Activated CD4-positive, alpha-beta T cell treated with anti-CD3 and anti-CD28 coated beads, Interleukin-2, amount 10 ng/mL, durations not matched to agents 24 days and 14 days (primary cell): ENCODE measurements at regions of chr20 and their contacts with region 1.

Region 1: DNA sequence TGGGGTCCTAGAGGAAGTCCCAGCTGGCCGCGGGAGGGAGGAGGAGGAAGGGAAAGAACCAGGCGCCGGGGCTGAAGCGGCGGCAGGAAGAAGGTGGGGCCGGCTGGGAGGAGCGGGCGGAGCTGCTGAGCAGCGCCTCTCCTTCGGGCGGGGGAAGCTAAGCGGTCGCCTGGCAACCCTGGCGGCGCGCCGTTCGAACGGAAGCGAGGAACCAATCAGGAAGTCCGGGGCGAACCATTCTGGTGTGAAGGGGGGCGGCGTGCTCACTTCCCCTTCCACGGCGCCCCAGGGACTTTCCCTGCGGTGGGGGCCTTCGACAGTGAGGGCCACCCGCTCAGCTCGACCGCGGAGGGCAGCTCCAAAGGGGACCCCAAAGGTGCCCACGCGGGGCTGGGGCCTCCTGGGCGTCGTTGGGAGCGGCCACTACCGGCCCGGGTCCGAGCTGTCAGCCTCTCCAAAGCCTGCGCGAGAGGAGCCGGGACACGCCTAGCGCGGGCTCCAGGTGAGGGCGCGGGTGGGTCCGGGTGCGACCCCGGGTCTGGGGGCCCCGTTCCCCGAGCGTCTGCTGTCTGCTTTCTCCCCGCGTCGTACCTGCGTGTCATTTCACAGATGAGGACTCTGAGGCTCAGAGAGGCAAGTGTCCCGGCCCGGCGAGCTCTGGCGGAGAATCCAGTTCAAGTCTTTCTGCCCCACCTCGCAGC is at the start of gene FAM110A:
- DNase-seq: peak; percentile 99
- H3K4me3 Mint-ChIP-seq: peak within 1 kb of the TSS; percentile 84
- H3K27ac Mint-ChIP-seq: peak within 1 kb of the TSS; percentile 85
- H3K4me1 Mint-ChIP-seq: peaks cover 43% of the 10 kb centered on the region
- H3K27me3 Mint-ChIP-seq: no peaks in the 10 kb centered on the region
- total RNA-seq, gene FAM110A: 13.3 and 15.4 TPM in 2 replicates

Region 2: GRCh38 chr20:653110-653589 is 180.4 kb before region 1 on chr20 and contains the start of gene SRXN1:
- intact Hi-C with region 1: loop called (anchors 2 kb)
- DNase-seq: peak; percentile 94
- H3K4me3 Mint-ChIP-seq: peak within 1 kb of the TSS; percentile 91
- H3K27ac Mint-ChIP-seq: peak within 1 kb of the TSS; percentile 84
- H3K4me1 Mint-ChIP-seq: peaks cover 29% of the 10 kb centered on the region
- H3K27me3 Mint-ChIP-seq: peaks cover 31% of the 10 kb centered on the region
- total RNA-seq, gene SRXN1: 24.1 and 25.5 TPM in 2 replicates

Region 3: GRCh38 chr20:815914-816606 is 17.5 kb before region 1 on chr20:
- intact Hi-C with region 1: no loop called
- DNase-seq: peak; percentile 89
- H3K4me3 Mint-ChIP-seq: no peak overlapping the region
- H3K27ac Mint-ChIP-seq: no peak overlapping the region
- H3K4me1 Mint-ChIP-seq: peaks cover 2% of the 10 kb centered on the region
- H3K27me3 Mint-ChIP-seq: peaks cover 1% of the 10 kb centered on the region

Region 4: DNA sequence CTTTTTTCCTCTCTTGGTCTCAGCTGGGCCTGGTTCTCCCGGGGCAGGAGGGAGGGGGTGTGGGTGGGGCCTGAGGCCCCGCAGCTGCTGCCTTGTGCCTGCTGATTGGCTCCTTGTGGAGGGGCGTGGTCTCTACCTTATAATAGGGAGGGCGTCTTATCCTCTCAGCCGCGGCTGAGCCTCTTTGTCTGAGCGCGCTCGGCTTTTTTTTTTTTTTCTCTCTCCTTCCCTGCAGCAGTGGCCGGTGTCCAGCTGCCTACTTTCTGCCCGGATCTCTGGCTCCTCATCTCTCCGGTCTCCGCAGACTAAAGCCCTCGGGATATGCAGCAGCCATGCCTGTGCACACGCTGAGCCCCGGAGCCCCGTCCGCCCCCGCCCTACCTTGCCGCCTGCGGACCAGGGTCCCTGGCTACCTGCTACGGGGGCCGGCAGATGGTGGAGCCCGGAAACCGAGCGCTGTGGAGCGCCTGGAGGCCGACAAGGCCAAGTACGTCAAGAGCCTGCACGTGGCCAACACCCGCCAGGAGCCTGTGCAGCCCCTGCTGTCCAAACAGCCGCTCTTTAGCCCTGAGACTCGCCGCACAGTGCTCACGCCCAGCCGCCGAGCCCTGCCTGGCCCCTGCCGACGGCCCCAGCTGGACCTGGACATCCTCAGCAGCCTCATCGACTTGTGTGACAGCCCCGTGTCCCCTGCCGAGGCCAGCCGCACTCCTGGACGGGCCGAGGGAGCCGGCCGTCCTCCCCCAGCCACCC is 11.0 kb after region 1 on chr20:
- intact Hi-C with region 1: loop called (anchors 1 kb)
- DNase-seq: peak; percentile 96
- H3K4me3 Mint-ChIP-seq: peak overlapping the region; percentile 87
- H3K27ac Mint-ChIP-seq: peak overlapping the region; percentile 57
- H3K4me1 Mint-ChIP-seq: peaks cover 46% of the 10 kb centered on the region
- H3K27me3 Mint-ChIP-seq: no peaks in the 10 kb centered on the region

Region 5: DNA sequence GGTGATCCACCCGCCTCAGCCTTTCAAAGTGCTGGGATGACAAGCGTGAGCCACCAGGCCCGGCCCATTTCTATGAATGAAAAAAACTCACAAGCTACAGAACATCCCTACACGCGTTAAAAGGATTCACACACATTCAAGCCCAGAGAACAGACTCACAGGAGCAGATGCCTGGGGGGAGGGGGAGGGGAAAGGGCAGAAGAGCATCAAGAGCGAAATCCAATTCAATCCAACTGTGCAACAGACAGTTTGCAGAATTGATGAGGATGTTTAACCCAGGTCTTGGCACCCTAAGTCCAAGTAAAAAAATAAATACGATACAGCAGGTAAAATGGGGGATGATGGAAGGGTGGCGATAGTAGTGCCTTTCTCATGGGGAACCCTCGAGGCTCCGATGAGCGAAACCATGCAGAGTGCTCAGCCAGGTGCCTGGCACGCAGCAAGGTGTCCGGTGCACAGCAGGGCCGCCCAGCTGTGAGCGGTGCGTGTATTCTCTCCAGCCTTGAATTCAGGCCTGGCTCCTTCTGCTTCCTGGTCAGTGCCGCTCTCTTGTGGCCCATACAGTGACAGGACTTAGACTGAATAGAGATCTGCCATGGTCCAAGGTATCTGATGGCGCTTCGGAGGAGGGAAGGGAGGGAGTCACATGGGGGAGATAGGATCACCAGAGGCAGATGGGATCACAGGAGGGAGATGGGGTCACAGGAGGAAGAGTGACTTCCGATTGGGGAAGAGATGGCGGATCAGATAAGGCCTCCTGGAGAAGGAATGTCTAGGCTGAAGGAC is 118.0 kb after region 1 on chr20:
- intact Hi-C with region 1: no loop called
- DNase-seq: no peak
- H3K4me3 Mint-ChIP-seq: no peak overlapping the region
- H3K27ac Mint-ChIP-seq: no peak overlapping the region
- H3K4me1 Mint-ChIP-seq: peaks cover 2% of the 10 kb centered on the region
- H3K27me3 Mint-ChIP-seq: peaks cover 32% of the 10 kb centered on the region